AG04450 (cell line): ENCODE measurements at regions of chr17 and their contacts with region 1.

Region 1: GRCh38 chr17:75447951-75448856 is 8.2 kb upstream of the TMEM94 start:
- DNase-seq: no peak
- H3K4me3 ChIP-seq: no peak overlapping the region
- H3K27ac ChIP-seq: no peak overlapping the region
- H3K27me3 ChIP-seq: no peaks in the 10 kb centered on the region
- CTCF ChIP-seq: no peak

Region 2: GRCh38 chr17:75390982-75391381 is 57.2 kb before region 1 on chr17:
- CTCF ChIA-PET with region 1: no interaction called
- POLR2A ChIA-PET with region 1: no interaction called
- DNase-seq: no peak
- H3K4me3 ChIP-seq: no peak overlapping the region
- H3K27ac ChIP-seq: no peak overlapping the region
- H3K27me3 ChIP-seq: no peaks in the 10 kb centered on the region
- CTCF ChIP-seq: no peak

Region 3: GRCh38 chr17:75506139-75506908 is 58.1 kb after region 1 on chr17:
- CTCF ChIA-PET with region 1: no interaction called
- POLR2A ChIA-PET with region 1: interaction called, 11 read pairs
- DNase-seq: no peak
- H3K4me3 ChIP-seq: no peak overlapping the region
- H3K27ac ChIP-seq: no peak overlapping the region
- H3K27me3 ChIP-seq: no peaks in the 10 kb centered on the region
- CTCF ChIP-seq: no peak